Activated CD8-positive, alpha-beta T cell treated with anti-CD3 and anti-CD28 coated beads for 36 hours (primary cell): ENCODE measurements at regions of chr4 and their contacts with region 1.

Region 1: DNA sequence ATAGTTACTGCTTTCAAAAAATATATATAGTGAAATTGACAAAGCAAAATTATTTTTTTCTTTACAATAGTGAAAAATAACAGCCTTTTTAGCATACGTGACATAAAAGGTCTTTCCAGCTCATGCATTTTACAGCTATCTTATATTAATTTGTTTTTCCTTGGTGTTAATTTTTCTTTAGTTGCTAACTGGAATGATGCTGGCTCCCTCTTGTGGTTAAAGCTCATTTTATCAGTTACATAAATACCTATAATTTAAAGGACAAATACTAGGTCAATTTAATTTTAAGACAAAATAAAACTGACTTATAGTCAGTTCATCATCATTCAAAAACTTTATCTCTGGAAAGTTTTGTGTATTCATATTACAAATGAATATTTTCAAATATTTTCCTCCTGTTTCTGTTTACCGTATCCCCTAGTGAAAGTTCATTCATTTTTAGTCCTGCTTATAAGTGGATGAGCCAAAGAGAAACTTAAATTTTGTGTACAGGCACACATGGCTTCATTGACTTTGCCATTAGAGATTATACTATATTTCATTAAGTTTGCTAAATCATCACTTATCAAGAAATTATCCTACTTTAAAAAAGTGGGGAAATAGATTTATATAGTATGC is 9.9 kb upstream of the ANAPC4 start:
- DNase-seq: no peak
- ATAC-seq: no peak
- H3K4me3 Mint-ChIP-seq: no peak overlapping the region
- H3K27ac Mint-ChIP-seq: no peak overlapping the region
- H3K4me1 Mint-ChIP-seq: no peaks in the 10 kb centered on the region
- H3K27me3 Mint-ChIP-seq: no peaks in the 10 kb centered on the region
- CTCF ChIP-seq: peak; percentile 86

Region 2: DNA sequence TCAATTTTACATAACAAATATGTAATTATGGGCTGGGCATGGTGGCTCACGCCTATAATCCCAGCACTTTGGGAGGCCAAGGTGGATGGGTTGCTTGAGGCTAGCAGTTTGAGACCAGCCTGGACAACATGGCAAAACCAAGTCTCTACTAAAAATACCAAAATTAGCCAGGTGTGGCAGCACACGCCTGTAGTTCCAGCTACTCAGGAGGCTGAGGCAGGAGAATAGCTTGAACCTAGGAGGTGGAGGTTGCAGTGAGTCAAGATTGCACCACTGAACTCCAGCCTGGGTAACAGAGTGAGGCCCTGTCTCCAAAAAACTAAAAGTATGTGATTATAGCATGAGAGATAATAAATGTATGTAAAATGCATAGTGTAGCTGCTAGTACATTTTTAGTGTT is 1706.2 kb before region 1 on chr4:
- CTCF ChIA-PET with region 1: no interaction called
- POLR2A ChIA-PET with region 1: no interaction called
- intact Hi-C with region 1: no loop called
- DNase-seq: no peak
- ATAC-seq: no peak
- H3K4me3 Mint-ChIP-seq: no peak overlapping the region
- H3K27ac Mint-ChIP-seq: no peak overlapping the region
- H3K4me1 Mint-ChIP-seq: no peaks in the 10 kb centered on the region
- H3K27me3 Mint-ChIP-seq: no peaks in the 10 kb centered on the region
- CTCF ChIP-seq: no peak

Region 3: DNA sequence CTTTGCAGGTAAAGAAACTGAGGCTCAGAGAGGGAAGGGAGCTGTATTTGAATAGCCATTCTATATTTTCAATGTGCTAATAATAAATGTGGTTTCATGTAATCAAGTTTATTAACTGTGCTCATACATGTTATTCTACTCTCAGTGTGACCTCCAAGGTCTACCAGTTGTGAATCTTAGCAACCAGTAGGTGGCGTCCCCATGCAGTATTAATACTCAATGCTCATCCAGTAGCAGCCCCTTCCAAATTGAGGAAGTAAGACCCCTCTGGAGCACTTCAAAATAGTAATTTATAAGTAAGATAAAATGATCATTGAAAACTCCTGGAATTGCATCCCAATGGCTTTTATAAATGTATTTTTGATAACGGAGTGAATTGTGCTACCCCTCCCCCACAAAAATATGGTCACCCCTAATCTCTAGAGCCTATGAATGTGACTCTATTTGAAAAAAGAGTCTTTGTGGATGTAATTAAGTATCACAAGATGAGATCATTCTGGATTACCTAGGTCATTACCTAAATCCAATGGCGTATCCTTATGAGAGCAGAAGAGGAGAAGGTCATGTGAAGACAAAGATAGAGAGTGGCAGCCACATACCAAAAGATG is 186.5 kb before region 1 on chr4:
- CTCF ChIA-PET with region 1: interaction called, 11 read pairs
- POLR2A ChIA-PET with region 1: no interaction called
- intact Hi-C with region 1: loop called (anchors 5 kb)
- DNase-seq: peak; percentile 57
- ATAC-seq: peak; percentile 71
- H3K4me3 Mint-ChIP-seq: no peak overlapping the region
- H3K27ac Mint-ChIP-seq: no peak overlapping the region
- H3K4me1 Mint-ChIP-seq: peaks cover 21% of the 10 kb centered on the region
- H3K27me3 Mint-ChIP-seq: no peaks in the 10 kb centered on the region
- CTCF ChIP-seq: peak; percentile 84

Region 4: GRCh38 chr4:25330905-25331808 is 36.0 kb before region 1 on chr4:
- CTCF ChIA-PET with region 1: interaction called, 11 read pairs
- POLR2A ChIA-PET with region 1: no interaction called
- intact Hi-C with region 1: no loop called
- DNase-seq: no peak
- ATAC-seq: peak; percentile 79
- H3K4me3 Mint-ChIP-seq: peak overlapping the region; percentile 59
- H3K27ac Mint-ChIP-seq: peak overlapping the region; percentile 84
- H3K4me1 Mint-ChIP-seq: peaks cover 16% of the 10 kb centered on the region
- H3K27me3 Mint-ChIP-seq: no peaks in the 10 kb centered on the region
- CTCF ChIP-seq: no peak